BJ (cell line): ENCODE measurements at regions of chr20 and their contacts with region 1.

Region 1: GRCh38 chr20:49888345-49888966 is 26.9 kb downstream of the SPATA2 start:
- DNase-seq: no peak
- H3K4me3 ChIP-seq: no peak overlapping the region
- H3K27me3 ChIP-seq: no peaks in the 10 kb centered on the region
- CTCF ChIP-seq: peak; percentile 92

Region 2: DNA sequence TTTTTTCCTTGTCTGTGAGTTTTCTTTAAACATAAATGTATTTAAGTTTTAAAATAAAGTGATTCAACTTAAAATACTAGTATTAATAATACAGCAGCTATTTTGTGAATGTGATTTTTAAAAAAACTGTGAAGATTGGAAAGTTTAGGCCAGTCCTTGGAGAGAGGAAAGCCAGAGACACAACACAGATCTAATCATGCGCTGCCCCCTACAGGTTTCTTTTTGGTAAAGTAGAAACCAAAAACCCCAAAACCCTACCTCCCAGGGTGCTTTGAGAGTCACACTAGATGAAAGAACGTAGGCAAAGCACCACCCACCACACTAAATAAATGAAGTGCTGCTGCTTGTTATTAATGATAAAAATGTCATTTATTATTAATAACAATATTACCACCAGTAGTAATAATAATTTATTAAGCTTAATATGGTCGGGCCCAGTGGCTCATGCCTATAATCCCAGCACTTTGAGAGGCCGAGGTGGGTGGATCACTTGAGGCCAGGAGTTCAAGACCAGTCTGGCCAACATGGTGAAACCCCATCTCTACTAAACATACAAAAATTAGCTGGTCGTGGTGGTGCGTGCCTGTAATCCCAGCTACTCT is 42.1 kb before region 1 on chr20:
- CTCF ChIA-PET with region 1: interaction called, 22 read pairs
- POLR2A ChIA-PET with region 1: no interaction called
- DNase-seq: no peak
- H3K4me3 ChIP-seq: no peak overlapping the region
- H3K27me3 ChIP-seq: no peaks in the 10 kb centered on the region
- CTCF ChIP-seq: peak; percentile 59

Region 3: DNA sequence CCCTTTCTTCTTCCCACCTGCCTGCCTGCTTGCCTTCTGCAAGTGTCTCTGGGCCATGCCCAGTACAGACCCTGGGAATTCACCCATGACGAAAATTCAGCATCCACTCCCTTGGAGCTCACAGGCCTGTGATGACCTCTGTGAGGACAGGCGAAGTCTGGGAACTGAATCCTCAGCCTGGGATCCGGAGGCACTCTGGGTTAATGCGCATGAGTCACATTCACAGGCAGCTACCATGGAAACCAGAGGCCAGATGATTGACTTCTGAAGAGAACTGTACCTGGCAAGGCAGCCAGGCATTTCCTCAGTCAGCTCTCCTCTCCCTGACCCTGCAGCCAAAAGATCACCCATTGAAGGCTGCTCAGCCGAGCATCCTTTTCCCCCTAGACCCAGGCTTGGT is 34.8 kb before region 1 on chr20:
- CTCF ChIA-PET with region 1: interaction called, 21 read pairs
- POLR2A ChIA-PET with region 1: no interaction called
- DNase-seq: no peak
- H3K4me3 ChIP-seq: no peak overlapping the region
- H3K27me3 ChIP-seq: no peaks in the 10 kb centered on the region
- CTCF ChIP-seq: no peak

Region 4: GRCh38 chr20:49901588-49901987 is 13.1 kb after region 1 on chr20:
- CTCF ChIA-PET with region 1: interaction called, 24 read pairs
- POLR2A ChIA-PET with region 1: no interaction called
- DNase-seq: no peak
- H3K4me3 ChIP-seq: no peak overlapping the region
- H3K27me3 ChIP-seq: no peaks in the 10 kb centered on the region
- CTCF ChIP-seq: no peak